ENCODE measurements at regions of chrX and their contacts with region 1.

Region 1: DNA sequence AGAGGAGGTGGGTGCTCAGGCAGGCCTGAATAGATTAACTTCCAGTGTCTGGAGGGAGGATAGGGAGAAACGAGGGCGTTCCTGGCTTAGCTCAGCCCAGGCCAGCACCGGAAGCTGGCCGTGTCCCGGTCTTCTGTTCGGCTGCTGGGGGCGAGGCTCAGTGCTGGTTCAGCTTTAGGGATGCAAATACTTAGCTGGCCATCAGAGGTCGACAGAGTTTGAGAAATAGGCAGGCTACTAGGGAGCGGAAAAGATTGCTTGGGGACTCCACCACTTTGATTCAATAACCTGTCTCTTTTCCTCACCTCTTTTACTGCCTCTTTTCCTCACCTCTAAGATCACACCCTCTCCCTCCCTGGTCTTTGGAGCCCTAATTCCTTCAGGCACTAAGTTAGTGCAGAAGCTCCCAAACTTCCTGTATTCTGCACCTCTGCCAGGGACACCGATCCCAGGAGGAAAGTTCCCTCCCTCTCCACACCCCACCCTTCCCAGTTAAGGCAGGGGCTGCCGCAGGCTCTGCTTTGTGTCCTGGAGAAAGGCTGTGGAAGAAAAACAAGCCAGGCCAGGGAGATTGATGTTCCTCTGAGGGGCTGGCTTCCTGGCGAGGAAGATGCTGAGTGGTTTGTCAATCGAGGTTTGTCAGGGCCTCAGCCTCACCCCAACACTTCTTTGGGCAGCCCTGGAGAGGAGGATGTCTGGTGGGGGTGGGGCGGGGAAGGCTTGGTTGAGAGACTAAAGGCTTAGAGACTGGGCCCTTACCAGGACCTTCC is 6.0 kb upstream of the EFNB1 start:
- DNase-seq: peak in 1 of 2 donors; percentile 48
- H3K4me3 ChIP-seq: no peak overlapping the region
- H3K27ac ChIP-seq: no peak overlapping the region
- H3K4me1 ChIP-seq: no peaks in the 10 kb centered on the region
- H3K27me3 ChIP-seq: no peaks in the 10 kb centered on the region
- CTCF ChIP-seq: peak; percentile 48 to 49

Region 2: GRCh38 chrX:68686097-68686977 is 136.5 kb before region 1 on chrX:
- intact Hi-C with region 1: no loop called
- DNase-seq: no peak
- H3K4me3 ChIP-seq: peak overlapping the region; percentile 28 to 42
- H3K27ac ChIP-seq: no peak overlapping the region
- H3K4me1 ChIP-seq: peaks cover 0 to 3% (median 0%) of the 10 kb centered on the region in 4 donors
- H3K27me3 ChIP-seq: no peaks in the 10 kb centered on the region
- CTCF ChIP-seq: no peak

Region 3: GRCh38 chrX:69387567-69388487 is 565.0 kb after region 1 on chrX:
- intact Hi-C with region 1: loop called (anchors 2 kb)
- DNase-seq: peak in 1 of 2 donors; percentile 22
- H3K4me3 ChIP-seq: no peak overlapping the region
- H3K27ac ChIP-seq: no peak overlapping the region
- H3K4me1 ChIP-seq: peaks cover 0 to 14% (median 0%) of the 10 kb centered on the region in 4 donors
- H3K27me3 ChIP-seq: no peaks in the 10 kb centered on the region
- CTCF ChIP-seq: peak; percentile 51 to 66

Measured in tibial artery (tissue), 4 donors.